Prostate gland (tissue), 2 donors: ENCODE measurements at regions of chr14 and their contacts with region 1.

Region 1: GRCh38 chr14:67666750-67667449 is 7.5 kb downstream of the VTI1B start:
- DNase-seq: peak; percentile 34
- H3K4me3 ChIP-seq: no peak overlapping the region
- H3K27ac ChIP-seq: peak overlapping the region; percentile 2 to 10
- H3K4me1 ChIP-seq: peaks cover 4% of the 10 kb centered on the region
- H3K27me3 ChIP-seq: no peaks in the 10 kb centered on the region
- CTCF ChIP-seq: peak; percentile 15 to 83 (median 67)
- POLR2A ChIP-seq: no peak

Region 2: DNA sequence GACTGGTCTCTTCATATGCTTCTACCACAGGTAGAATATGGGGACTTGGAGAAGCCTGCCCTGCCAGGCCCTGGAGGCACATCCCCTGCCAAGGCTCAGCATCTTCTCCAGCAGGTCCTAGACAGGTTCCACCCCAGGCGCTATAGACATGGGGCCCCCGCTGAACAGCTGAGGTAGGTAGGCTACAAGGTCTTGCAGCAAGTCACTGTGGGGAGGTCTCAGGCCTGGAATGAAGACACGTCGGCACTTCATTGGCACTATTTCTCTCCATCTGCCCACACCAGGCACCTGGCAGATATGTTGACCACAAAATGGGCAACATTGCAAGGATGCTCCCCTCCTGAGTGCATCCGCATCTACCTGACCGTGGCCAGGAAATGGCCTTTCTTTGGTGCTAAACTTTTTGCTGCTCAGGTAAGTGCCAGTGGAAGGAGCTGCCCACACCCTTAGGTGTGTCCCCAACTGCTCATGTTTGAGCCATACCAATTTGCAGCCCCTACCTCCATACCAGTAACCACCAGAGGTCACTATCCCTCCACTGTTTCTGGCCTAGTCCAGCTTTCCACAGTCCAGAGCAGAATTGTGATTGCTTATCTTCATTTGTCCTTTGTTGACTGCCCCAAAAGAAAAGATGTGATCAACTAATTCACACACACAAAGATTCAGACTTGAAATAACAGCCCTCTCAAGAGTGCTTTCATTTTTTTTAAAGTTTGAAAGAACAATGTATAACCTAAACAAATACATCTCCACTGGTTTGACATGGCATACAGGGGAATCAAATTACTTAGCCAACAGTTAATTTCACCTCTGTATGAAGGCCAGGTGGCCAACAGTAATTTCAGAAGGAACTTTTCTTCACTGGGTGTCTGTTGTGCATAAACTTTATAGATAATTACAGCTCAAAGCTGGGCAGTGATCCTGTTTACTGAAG is 82.9 kb before region 1 on chr14:
- intact Hi-C with region 1: no loop called
- DNase-seq: peak; percentile 46
- H3K4me3 ChIP-seq: no peak overlapping the region
- H3K27ac ChIP-seq: peak overlapping the region in 1 of 2 donors; percentile 24
- H3K4me1 ChIP-seq: no peaks in the 10 kb centered on the region
- H3K27me3 ChIP-seq: no peaks in the 10 kb centered on the region
- CTCF ChIP-seq: peak; percentile 30 to 73 (median 63)
- POLR2A ChIP-seq: no peak

Region 3: GRCh38 chr14:67619446-67620216 is 47.3 kb before region 1 on chr14 and contains the start of gene ARG2:
- intact Hi-C with region 1: loop called (anchors 2 kb)
- DNase-seq: peak; percentile 100
- H3K4me3 ChIP-seq: peak within 1 kb of the TSS; percentile 63 to 65
- H3K27ac ChIP-seq: peak within 1 kb of the TSS; percentile 86 to 89
- H3K4me1 ChIP-seq: peaks cover 5% of the 10 kb centered on the region
- H3K27me3 ChIP-seq: no peaks in the 10 kb centered on the region
- CTCF ChIP-seq: peak in 2 of 4 experiments; percentile 30 to 39
- POLR2A ChIP-seq: peak; percentile 92
- total RNA-seq, gene ARG2: 31.9 to 565 TPM